Activated T-helper 2 cell treated with anti-CD3 and anti-CD28 coated beads, Interferon-gamma antibody, Interleukin-2, Interleukin-4, amounts not matched to agents 10 μg/mL and 5 μg/mL and 100 μg/mL, durations not matched to agents 14 hours and 24 hours and 36 hours (primary cell): ENCODE measurements at regions of chr2 and their contacts with region 1.

Region 1: GRCh38 chr2:28392297-28393113 is at the start of gene FOSL2:
- DNase-seq: peak; percentile 95
- H3K4me3 Mint-ChIP-seq: peak within 1 kb of the TSS; percentile 87
- H3K27ac Mint-ChIP-seq: peak within 1 kb of the TSS; percentile 97
- H3K4me1 Mint-ChIP-seq: peaks cover 33% of the 10 kb centered on the region
- H3K27me3 Mint-ChIP-seq: no peaks in the 10 kb centered on the region
- total RNA-seq, gene FOSL2: 146 and 156 TPM in 2 replicates

Region 2: DNA sequence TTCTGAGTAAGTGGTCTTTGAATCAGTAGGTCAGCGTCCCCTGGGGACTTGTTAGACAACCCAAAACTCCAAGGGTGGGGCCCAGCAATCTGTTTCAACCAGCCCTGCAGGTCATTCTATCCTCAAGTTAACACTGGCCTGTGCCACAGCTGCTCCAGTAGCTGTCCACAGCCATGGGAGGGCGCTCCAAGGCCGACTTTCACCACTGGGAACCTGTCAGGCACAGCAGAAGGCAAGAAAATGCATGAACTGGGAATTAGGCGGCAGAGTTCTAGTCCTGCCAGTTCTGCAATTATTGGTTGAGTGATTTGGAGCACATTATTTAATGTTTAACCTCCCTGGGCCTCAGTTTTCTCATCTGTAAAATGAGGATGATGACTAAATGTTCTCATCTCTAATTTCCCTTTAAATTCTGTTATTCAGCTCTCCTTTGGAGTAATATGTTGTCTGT is 638.3 kb before region 1 on chr2:
- intact Hi-C with region 1: loop called (anchors 2 kb)
- DNase-seq: peak; percentile 57
- H3K4me3 Mint-ChIP-seq: no peak overlapping the region
- H3K27ac Mint-ChIP-seq: no peak overlapping the region
- H3K4me1 Mint-ChIP-seq: peaks cover 2% of the 10 kb centered on the region
- H3K27me3 Mint-ChIP-seq: peaks cover 2% of the 10 kb centered on the region

Region 3: DNA sequence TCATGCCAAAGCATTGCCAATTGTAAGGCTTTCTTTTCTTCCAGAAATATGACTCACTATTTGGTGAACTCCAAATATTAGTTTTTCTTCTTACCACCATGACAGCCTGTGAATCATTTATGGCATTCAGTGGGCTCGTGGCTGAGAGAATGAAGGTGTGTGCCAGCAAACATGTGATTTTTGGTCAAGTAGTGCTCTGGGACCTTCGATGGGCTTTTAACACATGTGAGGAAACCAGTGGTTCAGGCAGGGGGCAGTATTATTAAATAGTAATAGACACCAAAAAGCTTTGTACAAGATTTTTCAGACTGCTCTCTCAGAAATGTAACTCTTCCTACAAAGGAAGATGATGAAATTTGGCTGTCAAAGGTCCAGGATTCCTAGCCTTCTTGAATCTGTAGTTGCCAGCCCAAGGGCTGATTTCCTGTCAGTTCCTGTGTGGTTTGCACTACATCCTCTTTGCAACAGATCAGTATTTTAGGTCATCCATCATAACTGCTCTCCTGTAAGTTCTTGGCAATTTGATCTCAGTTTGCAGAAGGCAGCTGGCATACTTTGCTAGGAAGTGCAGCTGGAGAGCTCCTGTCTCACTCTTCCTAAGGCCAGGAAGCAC is 437.6 kb before region 1 on chr2:
- intact Hi-C with region 1: loop called (anchors 5 kb)
- DNase-seq: no peak
- H3K4me3 Mint-ChIP-seq: peak overlapping the region; percentile 53
- H3K27ac Mint-ChIP-seq: peak overlapping the region; percentile 72
- H3K4me1 Mint-ChIP-seq: peaks cover 81% of the 10 kb centered on the region
- H3K27me3 Mint-ChIP-seq: no peaks in the 10 kb centered on the region

Region 4: DNA sequence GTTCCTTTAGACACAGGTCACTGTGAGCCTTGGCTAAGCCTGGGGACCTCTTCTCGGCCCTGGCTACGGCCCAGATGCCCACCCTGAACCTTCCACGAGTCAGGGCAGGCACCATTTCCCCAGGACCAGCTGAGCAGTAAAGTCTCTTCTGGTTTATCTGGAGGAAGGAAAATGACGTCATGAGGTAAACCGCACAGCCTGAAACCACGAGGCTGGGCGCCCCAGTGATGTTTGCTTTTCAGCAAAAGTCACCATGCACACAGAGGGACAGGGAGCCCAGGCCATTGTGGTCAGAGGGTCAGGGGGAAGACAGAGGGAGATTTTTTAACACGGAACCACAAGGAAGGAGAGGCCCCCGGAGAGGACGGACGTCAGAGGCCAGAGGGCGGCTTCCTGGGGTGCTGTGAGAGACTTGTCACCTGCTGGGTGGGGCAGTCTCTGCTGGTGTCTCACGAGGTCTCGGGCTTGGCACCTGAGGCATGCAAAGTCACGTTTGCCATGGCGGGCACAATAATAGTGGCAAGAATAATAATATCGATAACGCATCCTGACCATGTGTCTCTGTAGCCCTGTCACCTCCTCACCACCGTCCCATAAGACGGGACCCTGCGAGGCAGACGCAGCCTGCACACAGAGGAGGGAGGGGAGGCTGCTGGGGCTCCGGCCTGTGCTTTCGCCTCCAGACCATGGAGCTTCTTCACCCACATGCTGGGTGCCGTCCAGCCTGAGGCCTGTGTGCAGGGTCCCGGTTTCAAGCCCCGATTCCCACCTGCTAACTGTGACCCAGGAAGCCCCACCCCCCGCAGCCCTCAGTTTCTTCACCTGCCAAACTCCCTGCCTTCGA is 33.1 kb before region 1 on chr2:
- intact Hi-C with region 1: loop called (anchors 1 kb)
- DNase-seq: peak; percentile 85
- H3K4me3 Mint-ChIP-seq: peak overlapping the region; percentile 72
- H3K27ac Mint-ChIP-seq: peak overlapping the region; percentile 97
- H3K4me1 Mint-ChIP-seq: peaks cover 63% of the 10 kb centered on the region
- H3K27me3 Mint-ChIP-seq: peaks cover 4% of the 10 kb centered on the region

Region 5: GRCh38 chr2:28423856-28424605 is 31.5 kb after region 1 on chr2:
- intact Hi-C with region 1: loop called (anchors 2 kb)
- DNase-seq: peak; percentile 33
- H3K4me3 Mint-ChIP-seq: peak overlapping the region; percentile 54
- H3K27ac Mint-ChIP-seq: peak overlapping the region; percentile 74
- H3K4me1 Mint-ChIP-seq: peaks cover 52% of the 10 kb centered on the region
- H3K27me3 Mint-ChIP-seq: no peaks in the 10 kb centered on the region

Region 6: DNA sequence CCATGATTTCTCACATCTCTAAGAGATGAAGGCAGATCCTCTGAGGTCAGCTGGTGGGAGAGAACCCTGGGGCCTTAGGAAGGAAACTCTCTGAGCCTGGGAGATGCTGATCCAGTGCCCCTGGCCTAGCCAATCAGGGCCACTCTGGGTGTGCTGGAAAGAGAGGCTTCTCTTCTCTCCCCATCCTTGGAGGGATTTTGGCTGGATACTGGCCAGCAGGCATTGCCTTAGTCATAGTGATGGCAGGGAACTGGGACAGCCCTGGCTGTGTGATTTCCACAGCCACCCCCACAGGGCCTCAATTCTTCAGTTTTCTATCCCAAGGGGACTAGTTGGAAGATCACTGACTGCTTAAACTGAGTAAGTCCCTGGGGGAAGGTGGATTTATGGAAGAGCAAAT is 76.8 kb after region 1 on chr2:
- intact Hi-C with region 1: loop called (anchors 5 kb)
- DNase-seq: no peak
- H3K4me3 Mint-ChIP-seq: no peak overlapping the region
- H3K27ac Mint-ChIP-seq: no peak overlapping the region
- H3K4me1 Mint-ChIP-seq: peaks cover 52% of the 10 kb centered on the region
- H3K27me3 Mint-ChIP-seq: no peaks in the 10 kb centered on the region